Naive thymus-derived CD4-positive, alpha-beta T cell (primary cell): ENCODE measurements at regions of chr4 and their contacts with region 1.

Region 1: GRCh38 chr4:40502934-40503333 is 126.7 kb downstream of the RBM47 start:
- DNase-seq: peak in 6 of 9 donors; percentile 11 to 41 (median 24)
- ATAC-seq: peak; percentile 54
- H3K4me3 ChIP-seq: no peak overlapping the region
- H3K4me3 Mint-ChIP-seq: peak overlapping the region in 7 of 10 donors; percentile 2 to 59 (median 20)
- H3K27ac ChIP-seq: no peak overlapping the region
- H3K27ac Mint-ChIP-seq: peak overlapping the region; percentile 23 to 89 (median 59)
- H3K4me1 ChIP-seq: peaks cover 0 to 10% of the 10 kb centered on the region in 2 donors
- H3K4me1 Mint-ChIP-seq: peaks cover 10 to 20% (median 17%) of the 10 kb centered on the region in 7 donors
- H3K27me3 ChIP-seq: no peaks in the 10 kb centered on the region
- H3K27me3 Mint-ChIP-seq: no peaks in the 10 kb centered on the region

Region 2: GRCh38 chr4:40603281-40603680 is 100.3 kb after region 1 on chr4:
- CTCF ChIA-PET with region 1: no interaction called
- POLR2A ChIA-PET with region 1: no interaction called
- intact Hi-C with region 1: loop called in 1 of 2 experiments (anchors 1 kb)
- DNase-seq: no peak
- ATAC-seq: no peak
- H3K4me3 ChIP-seq: no peak overlapping the region
- H3K4me3 Mint-ChIP-seq: no peak overlapping the region
- H3K27ac ChIP-seq: no peak overlapping the region
- H3K27ac Mint-ChIP-seq: no peak overlapping the region
- H3K4me1 ChIP-seq: no peaks in the 10 kb centered on the region
- H3K4me1 Mint-ChIP-seq: peaks cover 0 to 5% (median 0%) of the 10 kb centered on the region in 7 donors
- H3K27me3 ChIP-seq: no peaks in the 10 kb centered on the region
- H3K27me3 Mint-ChIP-seq: no peaks in the 10 kb centered on the region